Activated T-helper 1 cell treated with anti-CD3 and anti-CD28 coated beads, Interleukin-12 subunit alpha, Interleukin-12 subunit beta, Interleukin-2, Interleukin-4 antibody, amounts not matched to agents 30 ng/mL and 10 ng/mL and 1 ng/mL, durations not matched to agents 14 hours and 24 hours and 36 hours (primary cell): ENCODE measurements at regions of chr5 and their contacts with region 1.

Region 1: GRCh38 chr5:149345147-149345875 is at the start of gene GRPEL2:
- DNase-seq: peak; percentile 89
- H3K4me3 Mint-ChIP-seq: peak within 1 kb of the TSS; percentile 95
- H3K27ac Mint-ChIP-seq: peak within 1 kb of the TSS; percentile 94
- H3K4me1 Mint-ChIP-seq: peaks cover 43% of the 10 kb centered on the region
- H3K27me3 Mint-ChIP-seq: no peaks in the 10 kb centered on the region
- total RNA-seq, gene GRPEL2: 30.4 and 30.6 TPM in 2 replicates

Region 2: DNA sequence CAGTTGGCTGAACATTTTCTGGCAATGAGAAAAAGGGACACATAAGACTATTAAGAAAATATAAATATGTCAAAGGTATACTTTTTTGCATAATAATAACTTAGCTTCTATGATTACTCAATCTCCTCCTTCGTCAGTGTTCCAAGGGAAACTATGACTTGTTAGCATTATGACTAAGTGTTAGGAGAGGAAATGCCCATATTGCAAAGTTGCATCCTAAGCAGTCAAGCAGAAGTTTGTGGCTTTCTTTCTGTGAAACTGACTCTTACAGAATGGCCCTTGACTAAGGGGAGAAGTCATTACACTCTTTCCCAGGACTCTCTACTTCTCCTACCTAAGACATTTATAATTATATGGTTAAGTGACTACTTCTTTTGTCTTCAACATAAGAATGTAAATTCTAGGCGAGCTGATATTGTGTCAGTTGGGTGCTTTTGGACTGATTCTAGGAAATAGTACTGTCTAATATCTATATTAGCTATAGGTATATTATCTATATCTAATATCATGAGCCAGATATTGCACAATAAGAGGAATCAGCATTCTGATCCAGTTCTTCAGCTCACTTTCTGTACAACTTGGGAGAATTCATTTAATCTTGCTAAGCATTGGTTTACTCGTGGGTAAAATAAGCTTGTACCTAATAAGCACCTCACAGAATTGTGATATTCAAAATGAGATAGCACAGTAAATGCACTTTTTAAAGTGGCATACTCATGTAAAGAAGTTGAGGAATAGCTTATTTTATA is 1158.9 kb before region 1 on chr5:
- intact Hi-C with region 1: loop called (anchors 10 kb)
- DNase-seq: no peak
- H3K4me3 Mint-ChIP-seq: peak overlapping the region; percentile 7
- H3K27ac Mint-ChIP-seq: peak overlapping the region; percentile 52
- H3K4me1 Mint-ChIP-seq: peaks cover 24% of the 10 kb centered on the region
- H3K27me3 Mint-ChIP-seq: no peaks in the 10 kb centered on the region

Region 3: DNA sequence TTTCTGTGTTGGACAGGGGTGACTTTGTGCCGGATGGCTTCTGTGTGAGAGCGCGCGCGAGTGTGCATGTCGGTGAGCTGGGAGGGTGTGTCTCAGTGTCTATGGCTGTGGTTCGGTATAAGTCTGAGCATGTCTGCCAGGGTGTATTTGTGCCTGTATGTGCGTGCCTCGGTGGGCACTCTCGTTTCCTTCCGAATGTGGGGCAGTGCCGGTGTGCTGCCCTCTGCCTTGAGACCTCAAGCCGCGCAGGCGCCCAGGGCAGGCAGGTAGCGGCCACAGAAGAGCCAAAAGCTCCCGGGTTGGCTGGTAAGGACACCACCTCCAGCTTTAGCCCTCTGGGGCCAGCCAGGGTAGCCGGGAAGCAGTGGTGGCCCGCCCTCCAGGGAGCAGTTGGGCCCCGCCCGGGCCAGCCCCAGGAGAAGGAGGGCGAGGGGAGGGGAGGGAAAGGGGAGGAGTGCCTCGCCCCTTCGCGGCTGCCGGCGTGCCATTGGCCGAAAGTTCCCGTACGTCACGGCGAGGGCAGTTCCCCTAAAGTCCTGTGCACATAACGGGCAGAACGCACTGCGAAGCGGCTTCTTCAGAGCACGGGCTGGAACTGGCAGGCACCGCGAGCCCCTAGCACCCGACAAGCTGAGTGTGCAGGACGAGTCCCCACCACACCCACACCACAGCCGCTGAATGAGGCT is 519.1 kb before region 1 on chr5 and contains the start of gene ADRB2:
- intact Hi-C with region 1: loop called (anchors 10 kb)
- DNase-seq: peak; percentile 86
- H3K4me3 Mint-ChIP-seq: peak within 1 kb of the TSS; percentile 89
- H3K27ac Mint-ChIP-seq: peak within 1 kb of the TSS; percentile 75
- H3K4me1 Mint-ChIP-seq: peaks cover 34% of the 10 kb centered on the region
- H3K27me3 Mint-ChIP-seq: peaks cover 63% of the 10 kb centered on the region
- total RNA-seq, gene ADRB2: 0.83 and 0.93 TPM in 2 replicates

Region 4: DNA sequence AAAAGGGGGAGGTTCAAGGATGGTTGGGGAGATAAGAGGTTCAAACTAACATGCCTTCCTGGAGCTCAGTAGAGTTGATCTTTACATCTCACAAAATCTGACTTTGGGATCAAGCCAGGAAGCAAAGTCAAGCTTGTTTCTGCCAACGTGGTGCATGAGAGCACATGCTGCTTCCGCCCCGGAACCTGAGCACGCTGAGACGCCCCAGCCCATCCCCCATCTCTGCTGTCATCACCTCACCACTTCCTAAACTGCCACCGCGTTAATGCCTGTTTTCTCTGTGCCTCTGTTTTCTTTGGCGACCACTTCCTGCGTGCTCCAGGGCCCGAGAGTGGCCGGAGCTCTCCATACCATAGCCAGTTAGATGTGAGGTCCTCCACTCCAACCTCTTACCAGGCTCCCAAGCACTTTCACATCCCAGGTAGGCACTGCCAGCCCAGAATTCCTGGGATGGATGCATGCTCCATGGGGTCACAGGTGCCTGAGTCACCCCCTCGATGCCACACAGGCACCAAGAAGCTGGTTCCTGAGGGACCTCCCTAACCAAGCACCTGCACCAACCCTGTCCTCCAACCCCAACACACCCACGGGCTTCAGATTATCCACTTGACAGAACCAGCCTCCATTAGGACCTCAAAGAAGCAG is 104.8 kb before region 1 on chr5:
- intact Hi-C with region 1: no loop called
- DNase-seq: peak; percentile 65
- H3K4me3 Mint-ChIP-seq: peak overlapping the region; percentile 35
- H3K27ac Mint-ChIP-seq: peak overlapping the region; percentile 69
- H3K4me1 Mint-ChIP-seq: peaks cover 16% of the 10 kb centered on the region
- H3K27me3 Mint-ChIP-seq: peaks cover 14% of the 10 kb centered on the region

Region 5: GRCh38 chr5:149357370-149358293 is 12.3 kb after region 1 on chr5 and contains the start of gene PCYOX1L:
- intact Hi-C with region 1: loop called (anchors 1 kb)
- DNase-seq: peak; percentile 97
- H3K4me3 Mint-ChIP-seq: peak within 1 kb of the TSS; percentile 93
- H3K27ac Mint-ChIP-seq: peak within 1 kb of the TSS; percentile 84
- H3K4me1 Mint-ChIP-seq: peaks cover 67% of the 10 kb centered on the region
- H3K27me3 Mint-ChIP-seq: no peaks in the 10 kb centered on the region
- total RNA-seq, gene PCYOX1L: 21.9 and 23.4 TPM in 2 replicates

Region 6: GRCh38 chr5:149731639-149732323 is 386.5 kb after region 1 on chr5:
- intact Hi-C with region 1: loop called (anchors 2 kb)
- DNase-seq: peak; percentile 35
- H3K4me3 Mint-ChIP-seq: peak overlapping the region; percentile 86
- H3K27ac Mint-ChIP-seq: peak overlapping the region; percentile 40
- H3K4me1 Mint-ChIP-seq: peaks cover 5% of the 10 kb centered on the region
- H3K27me3 Mint-ChIP-seq: peaks cover 5% of the 10 kb centered on the region

Region 7: DNA sequence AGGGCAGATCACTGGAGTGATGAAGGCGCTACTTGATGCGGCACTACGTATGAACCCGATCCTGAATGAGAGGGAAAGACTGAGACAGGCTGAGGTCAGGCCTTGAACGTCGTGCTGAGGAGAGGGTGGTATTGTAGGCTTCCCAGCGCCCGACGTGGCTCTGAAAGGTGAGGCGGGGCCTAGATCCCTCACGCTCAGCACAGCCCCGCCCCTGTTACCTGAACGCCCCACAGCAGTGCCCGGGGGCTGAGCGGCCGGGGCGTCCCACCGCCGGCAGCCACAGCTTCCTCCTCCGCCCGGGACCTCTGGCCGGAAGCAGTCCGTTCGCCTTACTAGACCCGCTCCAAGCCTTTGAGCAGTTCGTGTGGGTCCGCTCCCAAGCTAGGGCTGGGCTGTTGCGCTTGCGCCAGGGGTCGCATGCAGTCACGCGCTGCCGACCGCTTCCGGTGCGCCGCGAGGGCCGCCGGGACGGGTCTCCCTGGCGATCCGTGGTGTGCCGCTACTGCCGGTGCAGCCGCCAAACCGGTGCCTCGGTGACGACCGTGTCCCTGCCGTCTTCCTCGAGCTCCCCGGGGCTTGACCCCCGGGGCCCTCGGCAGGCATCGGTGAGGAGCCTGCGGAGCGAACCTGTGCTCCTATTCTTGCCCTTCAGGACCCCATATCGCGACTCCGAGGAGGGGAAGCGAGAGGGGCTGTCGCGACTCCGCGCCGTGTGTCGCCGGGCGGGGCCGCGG is 655.1 kb after region 1 on chr5 and contains the starts of genes HMGXB3 and TIGD6:
- intact Hi-C with region 1: loop called (anchors 2 kb)
- DNase-seq: peak; percentile 82
- H3K4me3 Mint-ChIP-seq: peak within 1 kb of the TSS; percentile 99
- H3K27ac Mint-ChIP-seq: peak within 1 kb of the TSS; percentile 98
- H3K4me1 Mint-ChIP-seq: peaks cover 52% of the 10 kb centered on the region
- H3K27me3 Mint-ChIP-seq: no peaks in the 10 kb centered on the region
- total RNA-seq, gene HMGXB3: 49.1 and 49.9 TPM in 2 replicates
- total RNA-seq, gene TIGD6: 2.4 TPM in 2 replicates

Region 8: GRCh38 chr5:150409638-150410523 is 1064.6 kb after region 1 on chr5:
- intact Hi-C with region 1: loop called (anchors 2 kb)
- DNase-seq: peak; percentile 38
- H3K4me3 Mint-ChIP-seq: peak overlapping the region; percentile 91
- H3K27ac Mint-ChIP-seq: peak overlapping the region; percentile 98
- H3K4me1 Mint-ChIP-seq: peaks cover 45% of the 10 kb centered on the region
- H3K27me3 Mint-ChIP-seq: no peaks in the 10 kb centered on the region